ENCODE measurements at regions of chr1 and their contacts with region 1.

Region 1: GRCh38 chr1:203216274-203217138 is 13.0 kb downstream of the CHIT1 start:
- DNase-seq: peak; percentile 75
- ATAC-seq: peak; percentile 75
- H3K4me3 Mint-ChIP-seq: peak overlapping the region; percentile 29
- H3K27ac Mint-ChIP-seq: peak overlapping the region; percentile 34
- H3K4me1 Mint-ChIP-seq: peaks cover 17% of the 10 kb centered on the region
- H3K27me3 Mint-ChIP-seq: peaks cover 6% of the 10 kb centered on the region
- CTCF ChIP-seq: peak; percentile 75

Region 2: GRCh38 chr1:202791077-202791747 is 425.3 kb before region 1 on chr1:
- CTCF ChIA-PET with region 1: no interaction called
- POLR2A ChIA-PET with region 1: no interaction called
- DNase-seq: no peak
- ATAC-seq: no peak
- H3K4me3 Mint-ChIP-seq: no peak overlapping the region
- H3K27ac Mint-ChIP-seq: 0 out of 2 replicates have a peak overlapping the region, but pooled peaks have one; percentile 26
- H3K4me1 Mint-ChIP-seq: peaks cover 44% of the 10 kb centered on the region
- H3K27me3 Mint-ChIP-seq: no peaks in the 10 kb centered on the region
- CTCF ChIP-seq: no peak

Region 3: DNA sequence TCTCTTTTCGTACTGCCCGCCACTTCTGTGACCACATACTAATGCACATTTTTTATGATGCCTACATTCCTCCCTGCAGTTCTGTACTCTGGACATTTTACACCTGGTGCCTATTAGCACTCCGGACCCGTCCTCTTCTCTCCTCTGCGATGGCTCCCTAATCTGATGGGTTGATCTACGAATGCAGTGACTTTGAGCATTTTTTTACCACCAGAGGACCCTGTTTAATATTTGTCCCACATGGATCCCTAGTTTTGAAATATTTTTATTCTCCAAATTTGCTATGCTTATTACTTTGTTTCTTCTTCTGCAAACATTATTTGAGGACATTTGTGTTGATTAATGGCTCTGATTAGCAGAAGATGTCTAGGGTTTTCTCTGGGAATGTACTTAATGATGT is 185.0 kb before region 1 on chr1:
- CTCF ChIA-PET with region 1: interaction called, 17 read pairs
- POLR2A ChIA-PET with region 1: no interaction called
- DNase-seq: no peak
- ATAC-seq: no peak
- H3K4me3 Mint-ChIP-seq: no peak overlapping the region
- H3K27ac Mint-ChIP-seq: no peak overlapping the region
- H3K4me1 Mint-ChIP-seq: peaks cover 27% of the 10 kb centered on the region
- H3K27me3 Mint-ChIP-seq: peaks cover 23% of the 10 kb centered on the region
- CTCF ChIP-seq: no peak

Region 4: GRCh38 chr1:203057911-203058675 is 158.4 kb before region 1 on chr1:
- CTCF ChIA-PET with region 1: interaction called, 15 read pairs
- POLR2A ChIA-PET with region 1: no interaction called
- DNase-seq: no peak
- ATAC-seq: no peak
- H3K4me3 Mint-ChIP-seq: no peak overlapping the region
- H3K27ac Mint-ChIP-seq: no peak overlapping the region
- H3K4me1 Mint-ChIP-seq: peaks cover 34% of the 10 kb centered on the region
- H3K27me3 Mint-ChIP-seq: no peaks in the 10 kb centered on the region
- CTCF ChIP-seq: no peak

Region 5: DNA sequence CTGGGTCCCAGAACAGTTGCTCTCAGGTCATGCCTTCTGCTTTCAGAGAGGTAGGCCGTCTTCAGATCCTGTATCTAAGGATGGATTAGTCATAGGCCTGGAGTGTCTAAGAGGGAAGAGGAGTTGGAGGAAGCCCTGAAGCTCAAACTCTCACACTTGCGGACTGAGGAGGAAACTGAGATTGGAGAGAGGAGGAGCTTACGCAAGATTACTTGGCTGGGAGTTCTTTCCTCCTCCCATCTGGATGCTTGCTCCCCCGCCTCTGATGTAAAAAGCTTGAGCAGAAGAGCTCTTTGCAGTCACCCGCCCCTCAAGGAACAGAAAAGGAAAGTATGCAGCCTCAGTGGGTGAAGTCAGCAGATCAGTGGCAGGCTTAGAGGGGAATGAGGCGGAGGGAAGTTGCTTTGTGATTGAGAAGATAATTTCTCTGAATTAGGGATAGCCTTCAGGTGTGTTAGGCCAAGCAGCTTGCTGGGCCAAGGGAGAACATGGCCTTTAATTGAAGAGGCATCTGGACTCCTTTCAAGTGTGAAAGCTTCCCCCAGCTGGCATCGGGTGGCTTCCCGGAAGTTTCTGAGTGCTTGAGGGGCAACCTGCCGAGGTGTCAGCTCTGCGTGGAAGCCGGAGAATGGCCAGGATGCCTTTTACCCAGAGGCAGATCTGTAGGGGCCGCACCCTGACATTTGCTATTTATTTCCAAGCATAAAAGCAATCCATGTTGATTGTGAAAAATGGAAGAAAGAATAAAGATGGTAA is 82.4 kb before region 1 on chr1:
- CTCF ChIA-PET with region 1: interaction called, 132 read pairs
- POLR2A ChIA-PET with region 1: no interaction called
- DNase-seq: no peak
- ATAC-seq: peak; percentile 40
- H3K4me3 Mint-ChIP-seq: no peak overlapping the region
- H3K27ac Mint-ChIP-seq: no peak overlapping the region
- H3K4me1 Mint-ChIP-seq: peaks cover 11% of the 10 kb centered on the region
- H3K27me3 Mint-ChIP-seq: peaks cover 7% of the 10 kb centered on the region
- CTCF ChIP-seq: no peak

Region 6: GRCh38 chr1:203166566-203166940 is 50.0 kb before region 1 on chr1:
- CTCF ChIA-PET with region 1: interaction called, 75 read pairs
- POLR2A ChIA-PET with region 1: no interaction called
- DNase-seq: no peak
- ATAC-seq: peak; percentile 76
- H3K4me3 Mint-ChIP-seq: no peak overlapping the region
- H3K27ac Mint-ChIP-seq: no peak overlapping the region
- H3K4me1 Mint-ChIP-seq: peaks cover 3% of the 10 kb centered on the region; the same call in 1 of the 2 replicates
- H3K27me3 Mint-ChIP-seq: no peaks in the 10 kb centered on the region; the same call in 1 of the 2 replicates
- CTCF ChIP-seq: no peak

Region 7: DNA sequence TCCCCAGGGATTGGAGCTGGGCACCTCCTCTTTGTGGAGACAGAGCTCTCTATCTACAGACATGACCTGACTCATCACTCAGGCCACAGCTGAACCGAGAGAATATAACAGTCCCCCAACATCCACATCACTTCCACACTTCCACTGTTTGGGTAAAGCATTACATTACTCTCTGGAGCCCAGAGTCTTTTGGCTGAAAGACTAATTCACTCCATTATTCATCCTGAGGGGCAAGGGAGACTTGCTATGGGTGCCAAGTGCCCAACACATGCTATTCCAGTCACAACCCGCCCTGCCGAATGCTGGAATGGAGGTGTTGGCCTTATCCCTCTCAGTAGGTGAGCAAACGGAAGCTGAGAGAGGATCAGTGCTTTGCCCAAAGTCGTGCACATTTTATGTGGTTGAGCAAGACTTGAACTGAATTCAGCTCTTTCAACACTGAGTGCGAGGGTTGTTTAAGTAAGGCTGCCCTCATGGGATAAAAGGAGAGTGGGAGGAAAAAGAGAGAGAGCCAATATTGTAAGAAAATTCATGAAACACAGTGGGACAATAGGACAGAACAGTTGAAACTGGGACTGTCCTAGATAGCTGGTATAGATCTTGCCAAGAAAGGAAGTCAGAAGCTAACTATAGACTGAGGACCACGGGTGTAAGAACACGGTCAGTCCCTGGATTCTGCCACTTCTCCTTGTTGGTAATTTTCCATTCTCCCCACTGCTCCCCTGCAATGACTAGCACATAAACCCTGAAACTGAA is 16.5 kb before region 1 on chr1:
- CTCF ChIA-PET with region 1: interaction called, 14 read pairs
- POLR2A ChIA-PET with region 1: no interaction called
- DNase-seq: no peak
- ATAC-seq: no peak
- H3K4me3 Mint-ChIP-seq: no peak overlapping the region
- H3K27ac Mint-ChIP-seq: no peak overlapping the region
- H3K4me1 Mint-ChIP-seq: no peaks in the 10 kb centered on the region
- H3K27me3 Mint-ChIP-seq: peaks cover 3% of the 10 kb centered on the region; the same call in 1 of the 2 replicates
- CTCF ChIP-seq: no peak